ENCODE measurements at regions of chr1 and their contacts with region 1.

Region 1: GRCh38 chr1:54715493-54716298 is at the start of gene TTC4:
- DNase-seq: peak; percentile 85
- H3K4me3 ChIP-seq: peak within 1 kb of the TSS; percentile 47 to 94 (median 60)
- H3K27ac ChIP-seq: peak within 1 kb of the TSS; percentile 85
- H3K4me1 ChIP-seq: peaks cover 4% of the 10 kb centered on the region
- H3K27me3 ChIP-seq: no peaks in the 10 kb centered on the region
- CTCF ChIP-seq: peak in 1 of 2 donors; percentile 16
- total RNA-seq, gene TTC4: 22.7 to 29.2 TPM

Region 2: DNA sequence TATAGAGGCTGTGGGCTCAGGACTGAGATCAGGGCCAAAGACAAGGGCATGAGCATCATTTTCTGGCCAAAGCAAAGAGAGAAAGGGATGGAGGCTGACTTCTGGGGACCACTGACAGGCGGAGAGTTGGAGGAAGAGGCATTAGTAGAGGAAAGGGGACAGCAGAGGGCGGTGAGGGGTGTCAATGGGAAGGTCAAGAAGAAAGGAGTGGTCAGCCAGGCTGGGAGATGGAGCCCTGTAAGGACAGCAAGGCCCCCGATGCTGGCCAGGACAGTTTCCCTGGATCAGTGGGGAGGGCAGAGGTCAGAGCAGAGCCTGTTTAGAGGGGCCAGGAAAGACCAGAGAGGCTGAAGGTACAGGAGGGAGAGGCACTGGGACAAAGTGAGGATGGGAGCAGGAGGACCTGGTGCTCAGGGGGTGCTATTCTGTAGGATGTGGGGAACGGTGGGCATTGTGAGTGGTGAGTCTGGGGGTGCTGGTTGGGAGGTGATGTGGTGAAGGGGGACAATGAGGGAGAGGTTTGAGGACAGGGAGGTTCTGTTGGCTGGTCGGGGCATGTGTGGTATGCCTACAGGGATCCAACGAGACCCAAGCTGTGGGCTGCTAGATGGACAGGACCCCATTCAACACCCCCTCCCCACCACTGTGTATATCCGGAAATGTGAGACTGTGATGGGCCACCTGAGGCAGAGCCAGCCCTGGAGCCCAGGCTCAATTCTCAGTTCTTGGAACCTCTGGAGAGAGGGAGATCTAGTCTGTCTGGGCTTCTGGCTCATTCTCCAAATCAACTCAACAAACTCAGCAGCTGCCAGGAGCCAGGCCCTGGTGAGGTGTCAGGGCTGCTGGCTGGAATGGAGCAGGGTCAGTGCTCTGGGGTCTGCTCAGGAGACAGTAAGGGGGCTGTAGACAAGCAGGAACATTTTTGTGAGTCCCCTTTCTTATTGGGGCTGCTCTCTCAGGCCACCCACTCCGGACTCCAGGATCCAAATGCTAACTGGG is 90.9 kb before region 1 on chr1:
- CTCF ChIA-PET with region 1: no interaction called
- dilution Hi-C with region 1: no loop called
- in situ Hi-C with region 1: no loop called
- intact Hi-C with region 1: no loop called
- DNase-seq: no peak
- H3K4me3 ChIP-seq: no peak overlapping the region
- H3K27ac ChIP-seq: no peak overlapping the region
- H3K4me1 ChIP-seq: no peaks in the 10 kb centered on the region
- H3K27me3 ChIP-seq: no peaks in the 10 kb centered on the region
- CTCF ChIP-seq: no peak

Region 3: DNA sequence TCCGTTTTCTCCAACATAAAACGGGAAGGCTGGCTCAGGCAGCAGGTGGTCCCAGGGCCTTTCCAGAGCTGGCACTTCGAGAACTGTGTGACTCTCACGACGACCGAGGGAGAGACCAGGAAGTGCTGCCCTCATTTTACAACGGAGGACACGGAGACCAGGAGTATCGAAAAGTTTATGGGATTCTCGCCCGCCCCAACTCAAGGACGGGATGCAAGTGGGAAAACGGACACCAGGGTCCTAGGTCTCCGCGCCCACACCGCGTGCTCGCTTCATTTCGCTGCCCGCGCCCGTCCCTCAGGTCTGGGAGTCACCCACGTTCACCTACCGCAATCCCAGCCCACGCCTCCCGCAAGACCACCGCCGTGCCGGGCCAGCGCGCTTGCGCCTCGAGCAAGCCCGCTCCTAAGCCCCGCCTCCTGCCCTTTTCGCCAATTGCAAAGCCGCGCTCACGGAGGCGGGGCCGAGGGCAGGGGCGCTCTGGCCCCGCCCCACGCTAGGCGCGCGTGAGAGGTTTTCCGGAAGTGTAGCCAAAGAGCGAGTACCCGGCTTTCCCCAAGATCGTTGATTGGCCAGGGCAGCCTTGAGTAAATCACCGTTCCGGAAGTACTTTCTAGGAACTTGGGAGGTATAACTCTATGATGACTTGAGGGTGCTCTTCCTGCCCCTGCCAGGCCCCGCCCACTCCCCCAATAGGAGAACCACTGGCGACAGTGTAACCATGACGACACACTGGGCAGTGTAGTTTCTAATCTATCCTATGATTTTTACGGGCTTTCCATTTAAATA is 48.6 kb after region 1 on chr1 and contains the start of gene PARS2:
- CTCF ChIA-PET with region 1: no interaction called
- dilution Hi-C with region 1: no loop called
- in situ Hi-C with region 1: no loop called
- intact Hi-C with region 1: loop called (anchors 2 kb)
- DNase-seq: peak; percentile 99
- H3K4me3 ChIP-seq: peak within 1 kb of the TSS; percentile 80 to 97 (median 96)
- H3K27ac ChIP-seq: peak within 1 kb of the TSS; percentile 73
- H3K4me1 ChIP-seq: peaks cover 8% of the 10 kb centered on the region
- H3K27me3 ChIP-seq: no peaks in the 10 kb centered on the region
- CTCF ChIP-seq: no peak
- total RNA-seq, gene PARS2: 4.5 to 10.3 TPM

Measured in mammary epithelial cell (primary cell).